Caco-2 (cell line): ENCODE measurements at regions of chr10 and their contacts with region 1.

Region 1: GRCh38 chr10:73601486-73601921 is 10.4 kb upstream of the USP54 start:
- DNase-seq: peak; percentile 77 to 81
- H3K4me3 ChIP-seq: no peak overlapping the region
- H3K4me3 Mint-ChIP-seq: peak overlapping the region; percentile 57
- H3K27ac Mint-ChIP-seq: peak overlapping the region; percentile 88
- H3K4me1 ChIP-seq: peaks cover 18% of the 10 kb centered on the region
- H3K4me1 Mint-ChIP-seq: peaks cover 12% of the 10 kb centered on the region
- H3K27me3 ChIP-seq: no peaks in the 10 kb centered on the region
- H3K27me3 Mint-ChIP-seq: no peaks in the 10 kb centered on the region
- CTCF ChIP-seq: no peak

Region 2: GRCh38 chr10:73625884-73626752 is 24.6 kb after region 1 on chr10:
- CTCF ChIA-PET with region 1: interaction called, 6 read pairs
- POLR2A ChIA-PET with region 1: interaction called, 9 read pairs
- intact Hi-C with region 1: loop called (anchors 2 kb)
- DNase-seq: peak; percentile 93 to 96
- H3K4me3 ChIP-seq: peak overlapping the region; percentile 84
- H3K4me3 Mint-ChIP-seq: peak overlapping the region; percentile 99
- H3K27ac Mint-ChIP-seq: peak overlapping the region; percentile 100
- H3K4me1 ChIP-seq: peaks cover 9% of the 10 kb centered on the region
- H3K4me1 Mint-ChIP-seq: no peaks in the 10 kb centered on the region
- H3K27me3 ChIP-seq: no peaks in the 10 kb centered on the region
- H3K27me3 Mint-ChIP-seq: no peaks in the 10 kb centered on the region
- CTCF ChIP-seq: no peak